AG04449 (cell line): ENCODE measurements at regions of chr13 and their contacts with region 1.

Region 1: GRCh38 chr13:45511310-45512097 is 46.8 kb downstream of the COG3 start:
- DNase-seq: no peak
- H3K4me3 ChIP-seq: no peak overlapping the region
- CTCF ChIP-seq: peak; percentile 60

Region 2: GRCh38 chr13:45184693-45185092 is 326.8 kb before region 1 on chr13:
- CTCF ChIA-PET with region 1: no interaction called
- POLR2A ChIA-PET with region 1: no interaction called
- DNase-seq: no peak
- H3K4me3 ChIP-seq: no peak overlapping the region
- CTCF ChIP-seq: no peak

Region 3: GRCh38 chr13:45500492-45501174 is 10.9 kb before region 1 on chr13:
- CTCF ChIA-PET with region 1: interaction called, 25 read pairs
- POLR2A ChIA-PET with region 1: no interaction called
- DNase-seq: no peak
- H3K4me3 ChIP-seq: no peak overlapping the region
- CTCF ChIP-seq: no peak

Region 4: GRCh38 chr13:45584816-45585215 is 73.3 kb after region 1 on chr13:
- CTCF ChIA-PET with region 1: no interaction called
- POLR2A ChIA-PET with region 1: no interaction called
- DNase-seq: no peak
- H3K4me3 ChIP-seq: no peak overlapping the region
- CTCF ChIP-seq: no peak